ENCODE measurements at regions of chr19 and their contacts with region 1.

Region 1: GRCh38 chr19:771332-771785 is 20.4 kb downstream of the MISP start:
- DNase-seq: no peak
- ATAC-seq: no peak
- H3K4me3 ChIP-seq: no peak overlapping the region
- H3K27ac ChIP-seq: no peak overlapping the region
- H3K4me1 ChIP-seq: peaks cover 6% of the 10 kb centered on the region
- H3K27me3 ChIP-seq: no peaks in the 10 kb centered on the region
- CTCF ChIP-seq: peak in 6 of 7 experiments; percentile 10 to 39 (median 24)
- POLR2A ChIP-seq: no peak

Region 2: GRCh38 chr19:610801-611505 is 160.4 kb before region 1 on chr19:
- intact Hi-C with region 1: no loop called
- DNase-seq: peak in 2 of 4 donors; percentile 35 to 39
- ATAC-seq: peak; percentile 38
- H3K4me3 ChIP-seq: no peak overlapping the region
- H3K27ac ChIP-seq: no peak overlapping the region
- H3K4me1 ChIP-seq: peaks cover 5% of the 10 kb centered on the region
- H3K27me3 ChIP-seq: no peaks in the 10 kb centered on the region
- CTCF ChIP-seq: no peak
- POLR2A ChIP-seq: no peak

Region 3: GRCh38 chr19:917323-918151 is 146.2 kb after region 1 on chr19 and contains the start of gene KISS1R:
- intact Hi-C with region 1: loop called (anchors 5 kb)
- DNase-seq: peak in 2 of 4 donors; percentile 42 to 52
- ATAC-seq: no peak
- H3K4me3 ChIP-seq: peak within 1 kb of the TSS in 1 of 2 donors; percentile 1
- H3K27ac ChIP-seq: no peak within 1 kb of the TSS
- H3K4me1 ChIP-seq: peaks cover 43% of the 10 kb centered on the region
- H3K27me3 ChIP-seq: peaks cover 0 to 22% of the 10 kb centered on the region in 2 donors
- CTCF ChIP-seq: peak; percentile 14 to 52 (median 31)
- POLR2A ChIP-seq: no peak
- total RNA-seq, gene KISS1R: 3.3 TPM in 1 of 2 donors, not detected in the other

Region 4: GRCh38 chr19:984165-984967 is 213.0 kb after region 1 on chr19 and contains the start of gene WDR18:
- intact Hi-C with region 1: loop called (anchors 10 kb)
- DNase-seq: peak; percentile 93 to 95 (median 94)
- ATAC-seq: peak; percentile 93
- H3K4me3 ChIP-seq: peak within 1 kb of the TSS; percentile 79 to 95
- H3K27ac ChIP-seq: peak within 1 kb of the TSS; percentile 77 to 95 (median 84)
- H3K4me1 ChIP-seq: peaks cover 42% of the 10 kb centered on the region
- H3K27me3 ChIP-seq: no peaks in the 10 kb centered on the region
- CTCF ChIP-seq: peak in 6 of 7 experiments; percentile 21 to 57 (median 30)
- POLR2A ChIP-seq: peak; percentile 65 to 86 (median 73)
- total RNA-seq, gene WDR18: 15.3 to 53.1 TPM

Region 5: DNA sequence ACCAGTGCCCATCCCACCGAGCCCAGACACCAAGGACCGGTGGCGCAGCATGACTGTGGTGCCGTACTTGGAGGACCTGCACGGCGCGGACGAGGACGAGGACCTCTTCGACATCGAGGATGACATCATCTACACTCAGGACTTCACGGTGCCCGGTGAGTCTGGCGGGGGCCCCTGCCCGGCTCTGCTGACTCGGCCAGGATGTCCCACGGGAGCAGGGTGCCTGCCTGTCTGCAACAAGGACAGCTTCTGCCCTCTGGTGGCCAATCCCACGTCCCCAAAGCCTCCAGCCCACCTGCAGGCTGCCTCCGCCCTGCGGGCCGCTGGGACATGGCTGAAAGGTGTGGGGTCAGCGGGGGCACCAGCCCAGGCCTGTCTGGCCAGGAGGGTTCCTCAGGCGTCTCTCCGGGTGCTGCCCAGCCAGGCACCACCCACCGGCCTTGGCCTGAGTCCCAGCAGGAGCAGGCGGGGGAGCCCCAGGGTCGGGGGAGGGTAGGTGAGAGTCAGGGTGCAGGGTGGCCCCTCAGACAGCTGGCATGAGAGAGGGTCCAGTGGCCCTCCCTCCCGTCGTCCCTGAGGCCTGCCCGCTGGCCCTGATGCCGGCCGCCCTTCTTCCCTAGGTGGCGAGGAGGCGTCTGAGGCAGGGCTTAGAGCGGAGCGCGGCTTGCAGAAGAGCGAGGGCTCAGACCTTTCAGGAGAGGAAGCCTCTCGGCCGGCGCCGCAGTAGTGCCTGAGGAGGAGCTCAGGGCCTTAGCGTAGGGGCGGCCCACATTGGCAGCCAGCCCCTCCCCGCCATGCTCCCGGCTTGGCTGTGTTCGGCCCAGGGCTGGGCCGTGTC is 451.9 kb after region 1 on chr19:
- intact Hi-C with region 1: no loop called
- DNase-seq: peak in 1 of 4 donors; percentile 45
- ATAC-seq: no peak
- H3K4me3 ChIP-seq: no peak overlapping the region
- H3K27ac ChIP-seq: no peak overlapping the region
- H3K4me1 ChIP-seq: peaks cover 11% of the 10 kb centered on the region
- H3K27me3 ChIP-seq: no peaks in the 10 kb centered on the region
- CTCF ChIP-seq: peak in 4 of 7 experiments; percentile 18 to 33 (median 26)
- POLR2A ChIP-seq: no peak

Measured in body of pancreas (tissue), 4 donors.